T-cell (primary cell): ENCODE measurements at regions of chr11 and their contacts with region 1.

Region 1: DNA sequence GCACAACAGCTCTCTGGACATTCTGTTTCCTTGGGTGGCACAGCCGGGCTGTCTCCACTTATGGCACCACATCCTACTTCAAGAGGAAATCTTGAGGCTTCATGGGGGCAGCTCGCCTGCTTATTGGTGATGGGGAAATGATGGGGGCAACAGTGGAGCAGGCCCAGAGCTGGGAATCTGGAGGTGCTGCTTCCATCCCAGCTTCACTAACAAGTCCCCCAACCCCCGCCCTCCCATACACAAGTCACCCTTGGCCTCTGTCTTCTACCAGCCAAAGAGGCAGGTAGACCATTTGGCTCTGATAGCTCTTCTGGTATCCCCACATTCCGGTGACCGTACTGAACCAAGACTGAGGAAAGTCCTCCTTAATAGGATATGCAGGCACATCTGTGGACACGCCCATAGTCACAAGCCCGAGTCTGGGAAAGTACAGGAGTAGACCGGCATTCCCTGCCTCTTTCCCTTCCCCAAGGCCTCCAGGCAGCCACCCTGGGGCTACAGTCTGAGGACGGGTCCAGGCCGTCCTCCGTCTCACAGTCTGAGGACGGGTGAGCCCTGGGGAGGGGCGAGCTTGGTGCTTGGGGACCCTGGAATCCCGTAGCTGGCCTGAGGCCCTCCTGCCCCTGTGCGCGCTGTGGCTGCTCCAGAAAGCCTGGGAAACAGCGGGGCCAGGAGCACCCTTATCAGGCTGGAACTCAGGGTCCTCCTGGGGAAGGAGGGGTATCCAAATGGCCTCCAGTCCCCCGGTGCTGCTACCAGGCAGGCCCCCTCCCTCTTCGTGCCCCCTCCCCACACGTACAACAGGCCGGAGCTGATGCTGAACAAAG is 145.6 kb downstream of the FEZ1 start:
- DNase-seq: no peak
- ATAC-seq: no peak
- H3K4me3 ChIP-seq: no peak overlapping the region
- H3K4me3 Mint-ChIP-seq: no peak overlapping the region
- H3K27ac ChIP-seq: no peak overlapping the region
- H3K27ac Mint-ChIP-seq: no peak overlapping the region
- H3K4me1 ChIP-seq: peaks cover 0 to 5% of the 10 kb centered on the region in 2 experiments
- H3K4me1 Mint-ChIP-seq: peaks cover 2% of the 10 kb centered on the region in 3 donors
- H3K27me3 ChIP-seq: peaks cover 0 to 30% of the 10 kb centered on the region in 2 experiments
- H3K27me3 Mint-ChIP-seq: peaks cover 13 to 16% of the 10 kb centered on the region in 2 donors

Region 2: DNA sequence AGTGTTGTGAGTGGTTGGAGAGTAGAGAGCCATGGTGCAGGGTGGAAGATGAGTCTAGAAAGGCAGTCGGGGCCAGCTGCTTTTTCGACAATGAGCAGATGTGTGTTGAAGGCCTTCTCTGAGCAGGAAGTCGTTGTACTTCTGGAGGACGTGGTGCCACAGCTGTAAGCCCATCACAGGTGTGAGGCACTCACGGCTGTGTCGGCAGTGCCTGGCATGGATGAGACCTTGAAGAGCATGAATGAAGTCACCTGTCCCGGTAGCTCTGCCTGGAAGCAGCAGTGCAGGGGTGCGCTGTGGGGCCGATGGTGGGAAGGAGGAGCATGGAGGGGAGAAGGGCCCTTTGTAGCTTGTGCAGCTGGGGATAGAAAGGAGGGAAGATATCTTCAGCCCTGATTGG is 20.6 kb before region 1 on chr11:
- CTCF ChIA-PET with region 1: interaction called in 1 of 2 experiments, 7 read pairs
- POLR2A ChIA-PET with region 1: interaction called in 1 of 2 experiments, 12 read pairs
- DNase-seq: no peak
- ATAC-seq: no peak
- H3K4me3 ChIP-seq: no peak overlapping the region
- H3K4me3 Mint-ChIP-seq: no peak overlapping the region
- H3K27ac ChIP-seq: no peak overlapping the region
- H3K27ac Mint-ChIP-seq: no peak overlapping the region
- H3K4me1 ChIP-seq: no peaks in the 10 kb centered on the region
- H3K4me1 Mint-ChIP-seq: peaks cover 0 to 10% (median 2%) of the 10 kb centered on the region in 3 donors
- H3K27me3 ChIP-seq: peaks cover 2 to 36% of the 10 kb centered on the region in 2 experiments
- H3K27me3 Mint-ChIP-seq: peaks cover 15 to 20% of the 10 kb centered on the region in 2 donors